AG04449 (cell line): ENCODE measurements at regions of chr10 and their contacts with region 1.

Region 1: GRCh38 chr10:122342293-122343134 is 32.0 kb upstream of the PLEKHA1 start:
- DNase-seq: peak; percentile 5
- H3K4me3 ChIP-seq: no peak overlapping the region
- CTCF ChIP-seq: peak; percentile 60

Region 2: DNA sequence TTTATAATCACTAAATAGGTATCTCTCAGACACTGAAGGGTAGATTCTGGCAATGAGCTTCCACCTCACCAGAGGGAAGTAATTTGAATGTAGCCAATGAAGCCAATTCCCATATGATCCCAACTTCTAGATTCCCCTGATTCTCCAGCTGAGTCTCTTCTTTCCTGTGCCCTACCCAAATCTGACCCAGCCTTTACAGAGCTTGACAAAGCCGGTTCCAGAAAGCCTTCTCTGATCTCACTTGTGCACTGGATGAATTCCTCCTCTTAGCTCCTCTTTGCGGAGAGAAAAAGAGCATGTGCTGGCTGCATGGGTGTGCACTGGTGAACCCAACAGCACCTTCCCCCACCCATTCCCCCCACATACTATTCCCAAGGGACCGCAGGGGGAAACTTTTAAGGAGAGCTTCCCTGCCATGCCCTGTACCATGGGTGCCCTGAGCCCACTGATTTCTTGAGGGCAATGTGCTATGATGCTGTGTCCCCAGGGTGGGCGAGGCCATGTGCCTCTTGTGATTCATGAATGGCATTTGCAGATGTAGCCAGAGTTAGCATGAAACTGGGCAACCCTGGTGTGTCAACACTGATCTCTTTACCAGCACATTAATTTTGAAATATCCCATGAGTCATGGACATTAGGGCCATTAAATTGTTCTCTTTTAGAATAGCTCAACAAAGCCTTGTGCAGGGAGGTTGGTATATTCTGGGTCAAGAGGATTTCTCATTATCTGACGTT is 18.4 kb before region 1 on chr10:
- CTCF ChIA-PET with region 1: interaction called, 13 read pairs
- POLR2A ChIA-PET with region 1: no interaction called
- DNase-seq: no peak
- H3K4me3 ChIP-seq: no peak overlapping the region
- CTCF ChIP-seq: no peak

Region 3: DNA sequence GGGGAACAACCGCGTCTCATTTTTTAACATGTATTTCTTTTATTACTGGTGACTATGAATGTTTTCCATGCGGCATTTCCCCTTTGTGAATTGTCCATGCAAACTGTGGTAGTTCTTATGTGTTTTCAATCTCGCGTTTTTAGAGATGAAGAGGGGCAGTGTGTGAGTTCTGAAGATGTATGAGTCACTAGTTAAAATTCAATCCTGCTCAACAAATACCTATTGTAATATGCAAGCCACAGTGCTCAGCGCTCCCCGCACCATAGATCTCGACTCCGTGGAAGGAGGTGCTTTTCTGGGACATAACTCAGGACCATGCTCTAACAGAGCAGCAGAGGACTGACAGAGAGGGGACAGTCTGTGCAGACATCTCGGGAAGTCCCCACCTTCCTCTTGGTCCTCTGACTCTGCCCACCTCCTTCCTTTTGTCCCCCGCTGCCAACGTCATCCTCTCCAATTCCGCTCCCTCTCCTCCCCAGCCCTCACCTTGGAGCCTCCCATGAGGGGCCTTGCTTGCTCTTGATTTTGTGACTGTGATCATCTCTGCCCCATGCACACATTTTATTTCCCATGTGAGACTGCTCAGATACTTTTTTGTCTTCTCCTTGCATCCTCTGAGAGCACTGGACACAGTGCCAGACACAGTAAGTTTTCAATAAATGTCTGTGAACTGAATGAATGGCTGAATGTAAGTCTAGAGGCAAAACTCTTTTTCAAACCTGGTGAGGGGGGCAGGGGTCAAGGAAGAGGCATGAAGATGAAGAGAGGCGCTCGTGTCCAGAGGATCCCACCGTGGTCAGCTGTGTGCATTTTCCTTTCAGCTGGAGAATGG is 10.7 kb before region 1 on chr10:
- CTCF ChIA-PET with region 1: interaction called, 10 read pairs
- POLR2A ChIA-PET with region 1: no interaction called
- DNase-seq: no peak
- H3K4me3 ChIP-seq: no peak overlapping the region
- CTCF ChIP-seq: no peak

Region 4: GRCh38 chr10:122352817-122353525 is 10.5 kb after region 1 on chr10:
- CTCF ChIA-PET with region 1: interaction called, 20 read pairs
- POLR2A ChIA-PET with region 1: no interaction called
- DNase-seq: no peak
- H3K4me3 ChIP-seq: no peak overlapping the region
- CTCF ChIP-seq: no peak

Region 5: DNA sequence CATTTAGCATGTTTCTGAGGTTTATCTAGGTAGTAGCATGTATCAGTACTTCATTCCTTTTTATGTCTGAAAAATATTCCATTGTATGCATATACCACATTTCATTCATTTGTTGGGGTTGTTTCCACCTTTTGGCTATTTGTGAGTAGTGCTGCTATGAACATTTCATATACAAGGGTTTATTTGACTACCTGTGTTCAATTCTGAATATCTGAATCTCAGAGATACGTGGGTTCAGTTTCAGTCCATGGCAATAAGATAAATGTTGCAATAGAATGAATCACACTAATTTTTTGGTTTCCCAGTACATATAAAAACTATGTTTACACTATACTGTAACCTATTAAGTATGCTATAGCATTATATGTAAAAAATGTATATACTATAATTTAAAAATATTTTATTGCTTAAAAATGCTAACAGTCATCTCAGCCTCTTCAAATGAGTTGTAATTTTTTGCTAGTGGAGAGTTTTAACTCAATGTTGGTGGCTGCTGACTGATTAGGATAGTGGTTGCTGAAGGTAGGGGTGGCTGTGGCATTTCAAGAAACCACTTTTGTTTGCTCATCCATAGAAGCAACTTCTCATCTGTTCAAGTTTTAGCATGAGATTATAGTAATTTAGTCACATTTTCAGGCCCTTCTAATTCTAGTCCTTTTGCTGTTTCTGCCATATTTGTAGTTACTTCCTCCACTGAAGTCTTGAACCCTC is 45.9 kb after region 1 on chr10:
- CTCF ChIA-PET with region 1: no interaction called
- POLR2A ChIA-PET with region 1: no interaction called
- DNase-seq: no peak
- H3K4me3 ChIP-seq: no peak overlapping the region
- CTCF ChIP-seq: no peak

Region 6: DNA sequence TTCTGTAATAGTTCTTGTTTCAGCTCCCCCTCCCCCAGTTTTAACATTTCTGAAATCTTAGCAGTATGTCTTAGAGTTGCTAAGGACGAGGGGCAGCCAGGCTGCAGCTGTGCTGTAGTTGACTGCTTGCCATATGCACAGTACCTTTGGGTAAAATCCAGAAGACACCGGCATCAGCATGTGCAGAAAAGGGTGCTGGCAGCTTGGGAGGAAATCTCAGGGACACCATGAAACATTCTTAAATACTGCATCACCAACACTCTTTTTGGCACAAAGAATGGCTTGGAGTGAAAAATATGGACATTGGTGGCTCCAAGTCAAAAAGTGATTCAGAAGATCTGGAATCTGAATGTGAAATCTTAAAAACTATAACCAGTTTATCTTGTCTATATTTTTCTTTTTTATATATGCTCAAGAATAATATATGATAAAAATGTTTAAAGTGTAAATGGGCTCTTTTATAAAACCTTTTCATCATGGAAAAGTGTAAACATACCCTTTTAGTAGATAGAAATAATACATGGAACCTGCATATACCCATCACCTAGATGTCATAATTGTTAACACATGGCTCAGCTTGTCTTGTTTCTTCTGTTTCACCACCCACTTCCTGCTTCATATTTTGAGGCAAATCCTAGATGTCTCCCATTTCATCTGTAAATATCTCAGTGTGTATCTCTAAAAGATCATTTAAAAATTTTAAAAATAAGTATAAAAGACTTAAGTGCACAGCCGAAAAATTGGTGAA is 77.5 kb after region 1 on chr10:
- CTCF ChIA-PET with region 1: interaction called, 12 read pairs
- POLR2A ChIA-PET with region 1: interaction called, 3 read pairs
- DNase-seq: no peak
- H3K4me3 ChIP-seq: no peak overlapping the region
- CTCF ChIP-seq: no peak

Region 7: DNA sequence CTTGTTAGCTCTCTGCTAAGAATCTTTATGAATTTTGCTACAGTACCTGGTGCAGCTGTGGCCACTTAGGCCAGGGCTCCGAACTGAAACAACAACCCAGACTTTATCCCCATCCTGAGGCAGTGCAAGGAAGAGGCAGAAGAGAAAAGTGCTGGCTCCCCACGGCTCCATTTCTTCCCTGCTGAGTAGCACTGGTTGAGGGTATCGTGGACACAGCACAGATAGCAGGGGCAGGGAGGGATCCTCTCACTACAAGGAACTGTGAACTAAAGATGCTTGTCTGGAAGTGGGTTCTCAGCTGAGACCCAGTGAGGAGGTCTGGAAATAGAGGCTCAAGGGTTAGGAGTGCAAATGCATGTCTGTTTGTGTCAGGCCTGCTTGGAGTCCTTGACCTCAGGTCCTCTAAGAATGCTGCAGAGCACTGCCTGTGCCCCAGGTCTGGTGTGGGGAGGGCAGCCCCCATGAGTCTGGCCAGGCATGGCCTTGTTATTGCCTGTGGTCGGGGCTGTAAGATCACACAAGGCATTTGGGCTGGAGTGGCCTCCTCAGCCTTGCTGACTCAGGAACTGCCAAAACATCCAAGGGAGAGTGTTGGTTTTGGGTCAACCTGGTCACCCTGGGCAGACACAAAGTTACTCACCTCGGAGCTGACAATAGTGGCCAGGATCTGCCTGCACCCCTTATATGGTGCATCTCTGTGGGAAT is 276.1 kb after region 1 on chr10:
- CTCF ChIA-PET with region 1: no interaction called
- POLR2A ChIA-PET with region 1: no interaction called
- DNase-seq: no peak
- H3K4me3 ChIP-seq: no peak overlapping the region
- CTCF ChIP-seq: no peak